ENCODE measurements at regions of chr2 and their contacts with region 1.

Region 1: GRCh38 chr2:124995185-124995912 is 970.3 kb downstream of the CNTNAP5 start:
- DNase-seq: no peak
- ATAC-seq: no peak

Region 2: GRCh38 chr2:125041846-125042245 is 46.5 kb after region 1 on chr2:
- intact Hi-C with region 1: loop called (anchors 2 kb)
- DNase-seq: no peak
- ATAC-seq: no peak

Measured in sciatic nerve (tissue), 2 donors.